ENCODE measurements at regions of chr17 and their contacts with region 1.

Region 1: DNA sequence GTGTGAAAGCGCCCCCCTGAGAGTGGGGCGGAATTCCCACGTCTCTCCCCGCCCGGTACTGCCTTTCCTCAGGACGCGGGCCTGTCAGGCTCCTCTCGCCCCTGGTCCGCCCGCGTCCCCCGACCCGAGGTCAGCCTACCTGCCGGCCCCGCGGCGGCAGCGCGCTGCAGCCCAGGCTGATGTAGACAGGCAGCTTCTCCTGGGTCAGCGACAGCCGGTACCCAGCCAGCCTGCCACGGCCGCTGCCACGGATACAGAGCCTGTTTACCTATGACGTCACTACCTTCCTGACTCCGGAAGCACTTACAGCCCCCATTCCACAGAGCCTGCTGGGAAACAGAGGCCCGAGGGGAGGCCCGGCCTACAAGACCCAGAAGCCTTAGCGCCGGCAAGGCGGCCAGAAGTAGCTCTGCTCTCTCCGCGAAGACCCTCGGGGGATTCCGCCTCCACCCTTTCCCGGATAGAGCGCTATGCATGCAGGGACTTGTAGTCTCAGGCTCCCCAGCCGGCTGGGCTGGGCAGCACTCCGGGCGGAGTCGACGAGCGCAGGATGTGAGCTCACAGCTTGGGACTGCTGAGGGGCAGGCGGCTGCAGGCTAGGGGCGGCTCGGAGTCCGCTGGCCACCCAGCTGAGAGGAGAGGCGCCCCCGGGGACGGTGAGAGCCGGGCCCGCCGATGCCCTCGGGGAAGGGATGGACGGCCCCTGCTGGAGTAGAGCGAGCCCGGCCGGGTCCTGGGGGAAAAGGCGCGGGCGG is at the starts of genes IFT20 and TNFAIP1:
- DNase-seq: peak; percentile 98
- ATAC-seq: peak; percentile 98
- H3K4me3 ChIP-seq: peak within 1 kb of the TSS; percentile 88
- H3K27ac ChIP-seq: peak within 1 kb of the TSS; percentile 36
- H3K4me1 ChIP-seq: peaks cover 3% of the 10 kb centered on the region
- H3K27me3 ChIP-seq: no peaks in the 10 kb centered on the region
- CTCF ChIP-seq: no peak
- EP300 ChIP-seq: 0 out of 4 replicates have a peak, but pooled peaks of 1 of the 2 experiments have one; percentile 34
- POLR2A ChIP-seq: peak; percentile 93
- RAD21 ChIP-seq: no peak
- polyA plus RNA-seq, gene IFT20: 9.4 to 13.1 TPM
- polyA plus RNA-seq, gene TNFAIP1: 1.8 to 3.9 TPM

Region 2: DNA sequence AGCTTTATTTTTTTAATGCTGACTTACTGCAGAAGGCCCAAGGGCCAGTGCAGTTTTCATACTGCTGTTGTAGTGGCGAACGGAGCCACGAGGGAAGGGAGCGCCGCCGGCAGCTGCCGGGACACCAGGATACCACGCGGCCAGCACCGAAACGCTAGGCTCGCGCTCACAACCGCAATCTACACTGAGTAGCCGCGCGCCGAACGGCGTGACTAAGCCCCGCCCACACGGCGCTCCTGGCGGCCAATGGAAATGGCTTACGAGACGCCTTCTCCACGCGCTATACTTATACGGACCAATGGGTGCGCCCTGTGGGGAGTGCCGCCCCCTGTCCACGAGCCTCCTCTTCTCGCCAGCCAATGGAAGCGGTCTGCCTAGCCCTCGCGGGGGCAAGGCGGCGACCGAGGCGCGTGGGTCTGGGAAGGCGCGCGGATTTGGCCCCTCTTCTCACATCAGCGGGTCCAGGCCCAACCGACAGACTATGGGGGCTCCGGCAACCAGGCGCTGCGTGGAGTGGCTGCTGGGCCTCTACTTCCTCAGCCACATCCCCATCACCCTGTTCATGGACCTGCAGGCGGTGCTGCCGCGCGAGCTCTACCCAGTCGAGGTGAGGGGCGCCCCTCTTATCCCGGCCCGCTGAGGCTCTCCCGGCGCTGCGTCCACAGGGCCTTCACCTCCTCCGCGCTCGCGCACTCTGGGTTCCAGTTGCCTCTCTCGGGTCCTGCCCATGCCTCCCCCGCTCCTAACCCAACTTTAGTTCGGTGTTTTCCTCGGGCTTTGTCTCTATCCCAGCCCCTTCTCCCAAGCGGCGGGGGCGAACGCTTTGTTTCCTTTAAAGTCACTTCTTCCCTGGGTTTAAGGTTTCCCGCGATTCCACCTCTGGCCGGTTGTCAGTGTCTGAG is 16.4 kb before region 1 on chr17 and contains the start of gene TMEM97:
- CTCF ChIA-PET with region 1: interaction called, 29 read pairs
- POLR2A ChIA-PET with region 1: interaction called, 13 read pairs
- RAD21 ChIA-PET with region 1: interaction called, 19 read pairs
- SMC1A ChIA-PET with region 1: interaction called, 12 read pairs
- in situ Hi-C with region 1: no loop called
- intact Hi-C with region 1: loop called (anchors 1 kb)
- DNase-seq: peak; percentile 87
- ATAC-seq: peak; percentile 98
- H3K4me3 ChIP-seq: peak within 1 kb of the TSS; percentile 94
- H3K27ac ChIP-seq: peak within 1 kb of the TSS; percentile 73
- H3K4me1 ChIP-seq: no peaks in the 10 kb centered on the region; the same call in 1 of the 2 replicates
- H3K27me3 ChIP-seq: no peaks in the 10 kb centered on the region
- CTCF ChIP-seq: 0 out of 6 replicates have a peak, but pooled peaks of 2 of the 3 experiments have one; percentile 3 to 9
- EP300 ChIP-seq: no peak
- POLR2A ChIP-seq: peak; percentile 83
- RAD21 ChIP-seq: no peak
- polyA plus RNA-seq, gene TMEM97: 58.0 to 130 TPM

Region 3: DNA sequence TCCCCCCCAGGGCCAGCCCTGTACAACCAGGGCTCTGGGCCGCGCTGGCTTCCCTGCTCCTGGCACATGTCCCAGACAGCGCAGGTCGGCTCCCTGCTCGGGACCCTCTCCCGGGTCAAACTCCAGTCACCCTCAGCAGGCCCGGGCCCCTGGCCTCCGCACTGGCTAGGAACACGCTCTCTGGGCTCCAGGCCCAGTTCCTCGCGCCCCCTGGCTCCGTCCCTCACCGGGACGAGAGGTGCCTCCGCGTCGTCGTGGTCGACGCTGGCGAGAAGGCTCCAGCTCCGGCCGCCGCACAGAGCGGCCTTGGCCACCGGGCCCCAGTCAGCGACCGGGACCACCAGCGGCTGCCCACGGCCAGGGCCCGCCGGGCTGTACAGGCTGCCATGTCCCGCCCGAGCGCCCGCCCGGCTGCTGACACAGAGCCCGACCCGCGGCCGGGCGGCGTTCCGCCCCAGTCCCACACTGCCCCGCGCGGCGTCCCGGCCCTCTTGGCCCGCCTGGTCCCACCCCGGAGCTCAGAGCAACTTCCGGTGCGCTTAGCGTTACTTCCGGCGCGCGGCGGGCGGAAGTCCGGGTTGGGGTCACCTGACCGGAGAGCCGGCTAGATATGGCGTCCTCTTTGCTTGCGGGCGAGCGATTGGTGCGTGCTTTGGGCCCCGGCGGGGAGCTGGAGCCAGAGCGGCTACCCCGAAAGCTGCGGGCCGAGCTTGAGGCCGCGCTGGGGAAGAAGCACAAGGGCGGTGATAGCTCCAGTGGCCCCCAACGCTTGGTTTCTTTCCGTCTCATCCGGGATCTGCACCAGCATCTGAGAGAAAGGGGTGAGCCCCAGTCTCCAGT is 21.9 kb after region 1 on chr17 and contains the start of gene POLDIP2:
- CTCF ChIA-PET with region 1: interaction called, 16 read pairs
- POLR2A ChIA-PET with region 1: interaction called, 26 read pairs
- RAD21 ChIA-PET with region 1: interaction called, 31 read pairs
- SMC1A ChIA-PET with region 1: interaction called, 27 read pairs
- in situ Hi-C with region 1: no loop called
- intact Hi-C with region 1: loop called (anchors 1 kb)
- DNase-seq: peak; percentile 55
- ATAC-seq: peak; percentile 100
- H3K4me3 ChIP-seq: peak within 1 kb of the TSS; percentile 92
- H3K27ac ChIP-seq: peak within 1 kb of the TSS; percentile 79
- H3K4me1 ChIP-seq: peaks cover 2% of the 10 kb centered on the region; the same call in 1 of the 2 replicates
- H3K27me3 ChIP-seq: no peaks in the 10 kb centered on the region
- CTCF ChIP-seq: no peak
- EP300 ChIP-seq: no peak
- POLR2A ChIP-seq: peak; percentile 97
- RAD21 ChIP-seq: no peak
- polyA plus RNA-seq, gene POLDIP2: 22.8 to 36.9 TPM